ENCODE measurements at regions of chr20 and their contacts with region 1.

Region 1: DNA sequence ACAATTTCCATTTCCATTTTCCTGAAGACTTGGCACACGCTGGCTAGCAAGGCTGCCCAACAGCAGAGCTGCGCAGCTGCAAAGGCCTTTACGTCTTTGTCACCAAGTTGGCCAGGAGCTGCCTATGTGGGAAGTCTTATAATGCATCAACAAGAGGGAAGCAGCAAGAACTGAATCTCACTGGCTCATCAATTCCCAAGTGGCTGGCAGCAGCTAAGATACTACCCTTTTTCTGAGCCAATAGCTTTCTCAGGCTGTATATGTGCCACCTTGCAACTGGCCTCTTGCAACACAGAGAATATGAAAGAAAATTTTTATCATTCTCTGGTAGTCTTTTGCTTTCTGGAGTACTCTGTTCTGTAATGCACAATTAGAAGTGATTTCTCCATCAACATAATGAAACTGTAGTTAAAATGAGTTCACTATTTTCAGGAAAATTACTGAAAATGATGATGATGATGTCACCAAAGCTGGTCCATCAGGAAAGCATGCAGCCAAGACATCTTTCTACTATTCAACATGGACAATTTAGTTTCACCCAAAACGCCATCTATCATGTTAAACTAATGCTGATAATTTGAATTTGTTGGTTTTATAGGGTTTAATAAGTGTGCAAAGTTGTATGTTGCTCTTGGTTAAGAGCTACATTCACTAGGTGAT is 97.3 kb upstream of the FOXA2 start:
- DNase-seq: no peak
- ATAC-seq: no peak

Region 2: GRCh38 chr20:22339091-22339881 is 342.4 kb before region 1 on chr20:
- intact Hi-C with region 1: loop called (anchors 2 kb)
- DNase-seq: no peak
- ATAC-seq: peak; percentile 49

Region 3: GRCh38 chr20:22623226-22623625 is 58.5 kb before region 1 on chr20:
- intact Hi-C with region 1: no loop called
- DNase-seq: no peak
- ATAC-seq: no peak

Region 4: GRCh38 chr20:22633360-22633759 is 48.4 kb before region 1 on chr20:
- intact Hi-C with region 1: no loop called
- DNase-seq: no peak
- ATAC-seq: no peak

Measured in left ventricle myocardium superior (tissue), 1 donor.